CD4-positive, alpha-beta T cell (primary cell): ENCODE measurements at regions of chr20 and their contacts with region 1.

Region 1: DNA sequence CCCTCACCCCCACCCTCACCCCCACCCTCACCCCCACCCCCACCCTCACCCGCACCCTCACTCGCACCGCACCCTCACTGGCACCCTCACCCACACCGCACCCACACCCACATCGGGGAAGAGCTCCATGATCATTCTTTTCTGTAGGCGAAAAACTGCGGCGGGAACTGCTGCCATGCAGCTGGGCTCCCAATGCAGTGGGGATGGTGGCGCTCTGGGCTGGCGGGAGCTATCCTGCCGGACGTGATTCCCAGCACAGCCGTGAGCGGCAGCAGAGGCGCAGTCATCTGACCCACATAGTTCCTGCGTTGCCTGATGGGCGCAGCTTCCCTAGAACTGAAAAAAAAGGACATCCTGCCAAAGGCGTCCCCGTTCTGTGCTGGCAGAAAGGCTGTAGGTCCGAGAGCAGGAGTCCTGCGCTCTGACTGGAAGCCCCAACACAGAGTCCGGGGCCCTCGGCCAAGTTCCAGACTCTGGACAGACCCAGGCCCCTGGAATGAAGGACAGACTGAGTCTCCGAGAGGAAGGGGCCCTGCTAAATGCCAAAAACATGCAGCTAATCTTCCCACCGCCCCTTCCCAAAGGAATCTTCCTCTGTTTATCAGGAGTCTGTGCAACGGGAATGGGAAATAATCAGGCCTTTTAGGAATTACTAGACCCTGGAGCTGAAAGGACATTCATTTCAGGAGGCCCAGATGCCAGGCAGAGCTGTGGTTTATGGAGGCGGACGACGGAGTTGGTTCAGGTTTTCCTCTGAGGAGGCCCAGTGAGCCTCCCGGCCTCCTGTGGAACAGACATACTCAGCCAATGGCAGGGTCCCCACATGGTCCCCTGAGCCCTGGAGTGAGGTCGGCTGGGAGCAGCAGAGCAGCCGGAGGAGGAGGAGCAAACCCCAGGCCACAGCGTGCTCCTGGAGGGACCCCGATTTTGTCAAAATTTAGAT is 14.1 kb upstream of the TCFL5 start:
- DNase-seq: peak in 2 of 14 experiments; percentile 40 to 51
- ATAC-seq: peak; percentile 46
- H3K4me3 ChIP-seq: no peak overlapping the region
- H3K4me3 Mint-ChIP-seq: peak overlapping the region; percentile 34
- H3K27ac ChIP-seq: peak overlapping the region in 1 of 2 donors; percentile 25
- H3K27ac Mint-ChIP-seq: peak overlapping the region; percentile 44
- H3K4me1 ChIP-seq: peaks cover 30% of the 10 kb centered on the region
- H3K4me1 Mint-ChIP-seq: peaks cover 28% of the 10 kb centered on the region
- H3K27me3 ChIP-seq: peaks cover 0 to 5% of the 10 kb centered on the region in 2 experiments
- H3K27me3 Mint-ChIP-seq: no peaks in the 10 kb centered on the region
- CTCF ChIP-seq: no peak

Region 2: GRCh38 chr20:62891111-62891510 is 15.4 kb after region 1 on chr20:
- CTCF ChIA-PET with region 1: interaction called, 3 read pairs
- POLR2A ChIA-PET with region 1: interaction called, 16 read pairs
- intact Hi-C with region 1: no loop called
- DNase-seq: peak in 12 of 14 experiments; percentile 16 to 78 (median 61)
- ATAC-seq: peak; percentile 71
- H3K4me3 ChIP-seq: no peak overlapping the region
- H3K4me3 Mint-ChIP-seq: peak overlapping the region; percentile 32
- H3K27ac ChIP-seq: peak overlapping the region; percentile 14 to 68
- H3K27ac Mint-ChIP-seq: peak overlapping the region; percentile 96
- H3K4me1 ChIP-seq: peaks cover 64% of the 10 kb centered on the region
- H3K4me1 Mint-ChIP-seq: peaks cover 45% of the 10 kb centered on the region
- H3K27me3 ChIP-seq: no peaks in the 10 kb centered on the region
- H3K27me3 Mint-ChIP-seq: no peaks in the 10 kb centered on the region
- CTCF ChIP-seq: no peak